Ascending aorta (tissue), 2 donors: ENCODE measurements at regions of chr12 and their contacts with region 1.

Region 1: DNA sequence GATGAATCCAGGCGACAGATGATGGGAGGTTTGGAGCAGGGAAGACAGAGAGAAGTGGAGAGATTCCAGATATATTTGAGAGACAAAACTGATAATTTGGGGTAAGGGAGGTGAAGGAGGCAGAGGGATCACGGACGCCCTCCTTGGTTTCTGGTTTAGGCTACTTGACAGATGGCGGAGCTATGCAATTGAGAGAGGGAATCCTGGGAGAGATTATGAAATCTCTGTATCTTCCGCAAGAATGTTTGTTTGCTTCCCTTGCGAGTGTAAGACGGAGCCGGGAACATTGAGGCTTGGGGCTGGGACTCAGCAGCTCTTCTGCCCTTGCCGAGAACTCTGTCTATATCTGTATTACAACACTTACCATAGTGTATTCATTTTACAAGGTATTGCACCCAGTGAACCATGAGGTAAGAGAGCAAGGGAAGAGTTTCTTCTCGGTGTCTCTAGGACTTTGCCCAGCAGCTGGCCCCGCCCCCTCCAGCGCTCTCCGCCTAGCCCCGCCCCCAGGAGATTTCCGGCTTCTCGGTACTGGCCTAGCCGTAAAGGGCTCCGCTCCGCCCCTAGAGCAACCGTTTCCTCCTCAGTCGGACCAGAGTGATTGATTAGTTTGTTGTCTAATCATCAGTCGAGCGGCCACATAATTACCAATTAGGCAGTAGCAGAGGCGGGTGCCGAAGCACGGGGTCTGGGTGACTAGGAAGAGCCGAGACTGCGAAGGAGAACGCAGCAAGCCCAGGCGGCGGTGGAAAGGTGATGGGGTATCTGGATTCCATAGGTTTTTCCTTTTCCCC is at the start of gene PRR13:
- DNase-seq: peak; percentile 98 to 100
- H3K4me3 ChIP-seq: peak within 1 kb of the TSS; percentile 69 to 74
- H3K27ac ChIP-seq: peak within 1 kb of the TSS; percentile 88 to 91
- H3K4me1 ChIP-seq: peaks cover 0 to 10% of the 10 kb centered on the region in 2 donors
- H3K27me3 ChIP-seq: no peaks in the 10 kb centered on the region
- CTCF ChIP-seq: no peak
- total RNA-seq, gene PRR13: 20.6 TPM

Region 2: GRCh38 chr12:53379389-53380103 is 61.7 kb before region 1 on chr12:
- intact Hi-C with region 1: loop called (anchors 1 kb)
- DNase-seq: peak; percentile 100
- H3K4me3 ChIP-seq: peak overlapping the region; percentile 86 to 87
- H3K27ac ChIP-seq: peak overlapping the region; percentile 95 to 99
- H3K4me1 ChIP-seq: peaks cover 23 to 37% of the 10 kb centered on the region in 2 donors
- H3K27me3 ChIP-seq: no peaks in the 10 kb centered on the region
- CTCF ChIP-seq: no peak

Region 3: GRCh38 chr12:53402871-53403270 is 38.4 kb before region 1 on chr12:
- intact Hi-C with region 1: no loop called
- DNase-seq: no peak
- H3K4me3 ChIP-seq: no peak overlapping the region
- H3K27ac ChIP-seq: no peak overlapping the region
- H3K4me1 ChIP-seq: no peaks in the 10 kb centered on the region
- H3K27me3 ChIP-seq: no peaks in the 10 kb centered on the region
- CTCF ChIP-seq: no peak

Region 4: DNA sequence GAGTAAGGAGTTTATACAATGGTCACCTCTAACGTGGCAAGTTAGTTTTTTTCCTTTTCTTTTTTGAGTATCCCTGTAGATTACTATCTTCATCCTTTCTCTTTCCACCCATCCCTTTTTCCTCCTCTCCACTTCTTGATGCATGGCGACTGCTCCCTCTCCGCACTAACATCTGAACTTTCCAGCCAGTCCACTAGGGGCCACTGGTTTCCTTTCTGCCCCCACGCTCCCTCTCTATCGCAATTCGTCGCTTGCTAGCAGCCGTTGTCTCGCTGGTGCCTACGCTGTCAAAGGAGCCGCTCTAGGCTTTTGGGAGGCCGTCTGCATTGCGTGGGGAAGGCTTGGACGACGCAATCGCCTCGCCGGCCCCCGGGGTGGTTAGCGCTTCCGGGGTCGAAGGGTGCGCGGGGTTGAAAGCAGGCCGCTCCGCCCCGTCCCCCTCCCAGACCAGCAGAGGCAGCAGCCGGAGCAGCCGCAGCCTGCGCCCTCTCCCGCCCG is 10.5 kb after region 1 on chr12 and contains the start of gene PCBP2:
- intact Hi-C with region 1: loop called (anchors 1 kb)
- DNase-seq: peak; percentile 95 to 99
- H3K4me3 ChIP-seq: peak within 1 kb of the TSS; percentile 74 to 91
- H3K27ac ChIP-seq: peak within 1 kb of the TSS; percentile 91 to 97
- H3K4me1 ChIP-seq: peaks cover 10 to 13% of the 10 kb centered on the region in 2 donors
- H3K27me3 ChIP-seq: no peaks in the 10 kb centered on the region
- CTCF ChIP-seq: peak; percentile 87 to 95 (median 89)
- total RNA-seq, gene PCBP2: 354 TPM

Region 5: DNA sequence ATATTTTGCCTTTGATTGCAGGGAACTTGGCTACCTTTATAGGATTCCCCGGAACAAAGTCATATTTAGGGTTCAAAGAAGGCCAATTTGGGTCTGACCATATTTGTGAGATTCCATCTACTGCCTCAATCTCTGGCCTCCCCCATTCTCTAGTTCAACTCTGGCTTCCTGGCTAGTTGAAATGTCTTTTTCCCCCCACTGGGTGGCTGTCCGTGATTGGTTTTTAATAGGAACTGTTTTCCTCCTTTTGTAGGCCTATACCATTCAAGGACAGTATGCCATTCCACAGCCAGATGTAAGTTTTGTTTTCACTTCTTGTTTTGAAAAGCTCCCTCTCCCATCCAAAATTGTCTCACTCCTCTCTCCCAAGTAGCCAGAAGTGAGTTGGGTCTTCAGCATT is 24.4 kb after region 1 on chr12:
- intact Hi-C with region 1: no loop called
- DNase-seq: no peak
- H3K4me3 ChIP-seq: no peak overlapping the region
- H3K27ac ChIP-seq: no peak overlapping the region
- H3K4me1 ChIP-seq: no peaks in the 10 kb centered on the region
- H3K27me3 ChIP-seq: no peaks in the 10 kb centered on the region
- CTCF ChIP-seq: no peak